Posterior vena cava (tissue), 2 donors: ENCODE measurements at regions of chr20 and their contacts with region 1.

Region 1: DNA sequence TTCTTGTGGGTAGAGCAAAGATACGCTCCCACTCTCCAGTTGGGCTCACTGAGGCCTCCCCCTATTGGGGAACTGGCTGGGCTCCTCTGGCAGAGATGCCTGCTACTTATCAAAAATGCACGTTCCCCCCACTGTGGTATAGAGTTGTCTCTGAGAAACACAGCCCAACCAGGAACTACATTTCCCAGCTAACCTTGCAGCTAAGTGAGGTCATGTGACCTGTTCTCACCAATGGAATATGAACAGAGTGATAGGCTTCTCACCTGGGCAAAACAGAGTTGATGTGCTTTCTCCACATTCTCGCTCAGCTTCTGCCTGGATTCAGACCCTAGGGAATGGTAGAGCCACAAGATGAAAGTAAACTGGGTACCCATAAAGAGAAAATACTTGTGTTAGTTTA is 49.1 kb upstream of the PTPRT start:
- DNase-seq: no peak

Region 2: GRCh38 chr20:43205699-43206098 is 33.1 kb before region 1 on chr20:
- intact Hi-C with region 1: no loop called
- DNase-seq: no peak

Region 3: GRCh38 chr20:43252761-43253160 is 13.9 kb after region 1 on chr20:
- intact Hi-C with region 1: loop called in 1 of 2 experiments (anchors 1 kb)
- DNase-seq: no peak